Calu3 (cell line): ENCODE measurements at regions of chr20 and their contacts with region 1.

Region 1: DNA sequence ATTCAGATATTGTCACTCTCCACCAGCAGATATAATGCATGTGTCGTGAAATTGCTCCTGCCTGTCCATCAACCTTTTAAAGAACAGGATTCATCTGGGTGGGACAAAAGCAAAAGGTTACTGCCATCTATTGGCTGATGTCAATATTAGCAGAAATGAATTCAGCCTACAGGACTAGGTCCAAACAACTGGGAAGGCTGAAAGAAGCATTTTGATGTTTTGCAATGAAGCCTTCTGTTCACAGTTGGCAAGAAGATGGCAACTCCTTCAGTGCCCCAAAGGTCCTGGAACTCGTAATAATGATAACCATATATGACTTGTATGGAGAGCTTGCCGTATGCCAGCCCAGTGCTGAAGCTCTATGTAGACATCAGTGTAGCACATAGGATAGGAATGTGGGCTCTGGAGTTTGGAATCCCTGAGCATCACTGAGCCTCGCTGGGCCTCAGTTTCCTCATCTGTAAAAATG is 7.5 kb downstream of the BCAS1 start:
- DNase-seq: peak; percentile 33
- H3K4me3 Mint-ChIP-seq: no peak overlapping the region
- H3K27ac Mint-ChIP-seq: no peak overlapping the region
- H3K4me1 Mint-ChIP-seq: peaks cover 22% of the 10 kb centered on the region
- H3K27me3 Mint-ChIP-seq: no peaks in the 10 kb centered on the region
- CTCF ChIP-seq: peak; percentile 69

Region 2: DNA sequence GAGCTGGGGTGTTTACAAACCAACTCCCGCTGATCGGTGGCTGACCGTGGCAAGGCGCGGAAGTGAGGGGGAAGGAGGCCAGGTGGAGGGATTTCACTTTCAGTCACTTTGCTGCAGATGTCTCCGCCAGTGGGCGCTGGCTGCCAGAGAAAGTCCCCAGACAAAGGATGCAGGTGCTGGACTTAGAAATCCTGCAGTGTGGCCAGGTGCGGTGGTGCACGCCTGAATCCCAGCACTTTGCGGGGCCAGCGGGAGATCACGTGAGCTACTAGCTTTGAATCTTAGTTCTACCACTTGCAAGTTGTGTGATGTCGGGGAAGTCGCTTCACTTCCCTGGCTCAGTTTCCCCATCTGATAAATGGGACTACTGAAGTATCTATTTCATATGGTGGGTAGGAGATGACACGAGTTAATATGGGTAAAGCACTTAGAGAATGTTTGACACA is 649.6 kb before region 1 on chr20:
- CTCF ChIA-PET with region 1: interaction called, 3 read pairs
- intact Hi-C with region 1: loop called (anchors 10 kb)
- DNase-seq: peak; percentile 74
- H3K4me3 Mint-ChIP-seq: no peak overlapping the region
- H3K27ac Mint-ChIP-seq: no peak overlapping the region
- H3K4me1 Mint-ChIP-seq: no peaks in the 10 kb centered on the region
- H3K27me3 Mint-ChIP-seq: peaks cover 53% of the 10 kb centered on the region
- CTCF ChIP-seq: peak; percentile 54